ENCODE measurements at regions of chr10 and their contacts with region 1.

Region 1: GRCh38 chr10:22228943-22229801 is 11.4 kb upstream of the EBLN1 start:
- DNase-seq: peak; percentile 86
- ATAC-seq: peak; percentile 90
- H3K4me3 ChIP-seq: peak overlapping the region; percentile 45 to 51
- H3K27ac ChIP-seq: peak overlapping the region; percentile 67
- H3K4me1 ChIP-seq: peaks cover 0 to 22% of the 10 kb centered on the region in 2 experiments; a peak in 3 of 4 replicates
- H3K27me3 ChIP-seq: no peaks in the 10 kb centered on the region
- CTCF ChIP-seq: no peak
- POLR2A ChIP-seq: no peak
- RAD21 ChIP-seq: no peak

Region 2: GRCh38 chr10:22010973-22011408 is 218.2 kb before region 1 on chr10:
- CTCF ChIA-PET with region 1: no interaction called
- POLR2A ChIA-PET with region 1: no interaction called
- RAD21 ChIA-PET with region 1: no interaction called
- intact Hi-C with region 1: loop called (anchors 10 kb)
- DNase-seq: peak; percentile 18
- ATAC-seq: no peak
- H3K4me3 ChIP-seq: no peak overlapping the region
- H3K27ac ChIP-seq: no peak overlapping the region
- H3K4me1 ChIP-seq: no peaks in the 10 kb centered on the region
- H3K27me3 ChIP-seq: no peaks in the 10 kb centered on the region
- CTCF ChIP-seq: peak in 1 of 3 experiments; percentile 40; a peak in 2 of 6 replicates
- POLR2A ChIP-seq: no peak
- RAD21 ChIP-seq: peak; percentile 55